Lower lobe of right lung (tissue), 2 donors: ENCODE measurements at regions of chr3 and their contacts with region 1.

Region 1: GRCh38 chr3:161423911-161424522 is 52.7 kb upstream of the SPTSSB start:
- DNase-seq: no peak
- ATAC-seq: peak; percentile 64 to 70
- H3K4me3 ChIP-seq: no peak overlapping the region
- H3K27ac ChIP-seq: no peak overlapping the region
- H3K4me1 ChIP-seq: no peaks in the 10 kb centered on the region
- H3K27me3 ChIP-seq: no peaks in the 10 kb centered on the region
- CTCF ChIP-seq: peak; percentile 80

Region 2: DNA sequence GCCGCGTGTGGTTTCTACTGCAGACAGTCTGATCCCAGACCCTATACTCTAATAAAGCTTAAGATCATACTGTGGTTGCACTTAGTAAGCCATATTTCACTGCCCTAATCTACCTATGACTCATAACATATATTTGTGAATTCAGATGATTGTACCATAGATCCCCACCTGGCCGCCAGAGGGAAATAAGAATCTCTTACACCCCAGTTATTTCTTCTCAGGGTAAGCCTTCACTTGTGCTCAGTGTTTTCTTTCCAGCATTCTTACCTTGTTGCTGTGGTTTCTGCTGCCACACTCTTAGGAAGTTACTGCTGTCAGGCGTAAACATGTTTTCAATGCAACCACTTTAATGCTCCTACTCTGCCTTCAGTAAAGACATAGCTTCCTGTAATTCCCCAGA is 424.7 kb before region 1 on chr3:
- intact Hi-C with region 1: no loop called
- DNase-seq: no peak
- ATAC-seq: no peak
- H3K4me3 ChIP-seq: no peak overlapping the region
- H3K27ac ChIP-seq: no peak overlapping the region
- H3K4me1 ChIP-seq: no peaks in the 10 kb centered on the region
- H3K27me3 ChIP-seq: no peaks in the 10 kb centered on the region
- CTCF ChIP-seq: no peak

Region 3: GRCh38 chr3:161274719-161275298 is 149.2 kb before region 1 on chr3:
- intact Hi-C with region 1: loop called (anchors 10 kb)
- DNase-seq: no peak
- ATAC-seq: peak in 1 of 2 donors; percentile 61
- H3K4me3 ChIP-seq: no peak overlapping the region
- H3K27ac ChIP-seq: no peak overlapping the region
- H3K4me1 ChIP-seq: no peaks in the 10 kb centered on the region
- H3K27me3 ChIP-seq: no peaks in the 10 kb centered on the region
- CTCF ChIP-seq: peak; percentile 51

Region 4: DNA sequence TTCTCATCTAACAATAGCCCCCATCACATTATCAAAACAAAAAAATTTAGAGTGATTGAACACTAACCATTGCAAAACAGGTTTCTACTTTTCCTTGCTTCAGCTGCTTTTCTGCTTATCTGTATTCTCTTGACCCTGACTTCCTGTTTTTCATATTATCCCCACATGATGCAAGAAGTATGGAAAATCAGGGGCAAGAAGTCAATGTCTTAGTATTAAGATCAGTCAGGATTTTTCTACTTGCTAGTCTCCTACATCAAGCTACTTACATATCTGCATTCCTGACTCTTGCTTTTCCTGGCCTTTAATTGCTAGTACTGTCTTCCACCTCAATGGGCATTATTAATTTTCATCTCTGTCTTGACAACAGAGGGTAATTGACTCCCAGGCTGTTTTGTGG is 372.8 kb after region 1 on chr3:
- intact Hi-C with region 1: no loop called
- DNase-seq: no peak
- ATAC-seq: no peak
- H3K4me3 ChIP-seq: no peak overlapping the region
- H3K27ac ChIP-seq: no peak overlapping the region
- H3K4me1 ChIP-seq: no peaks in the 10 kb centered on the region
- H3K27me3 ChIP-seq: no peaks in the 10 kb centered on the region
- CTCF ChIP-seq: no peak